ENCODE measurements at regions of chr5 and their contacts with region 1.

Region 1: GRCh38 chr5:133868946-133869518 is 99.4 kb downstream of the C5orf15 start:
- DNase-seq: peak; percentile 76
- H3K4me3 ChIP-seq: no peak overlapping the region
- H3K27ac ChIP-seq: no peak overlapping the region
- H3K4me1 ChIP-seq: peaks cover 6% of the 10 kb centered on the region
- H3K27me3 ChIP-seq: no peaks in the 10 kb centered on the region
- CTCF ChIP-seq: peak; percentile 75 to 82
- POLR2A ChIP-seq: no peak

Region 2: GRCh38 chr5:132591145-132591544 is 1277.9 kb before region 1 on chr5:
- CTCF ChIA-PET with region 1: no interaction called
- POLR2A ChIA-PET with region 1: no interaction called
- dilution Hi-C with region 1: no loop called
- intact Hi-C with region 1: no loop called
- DNase-seq: peak; percentile 23
- H3K4me3 ChIP-seq: no peak overlapping the region
- H3K27ac ChIP-seq: no peak overlapping the region
- H3K4me1 ChIP-seq: no peaks in the 10 kb centered on the region
- H3K27me3 ChIP-seq: no peaks in the 10 kb centered on the region
- CTCF ChIP-seq: no peak
- POLR2A ChIP-seq: no peak

Region 3: DNA sequence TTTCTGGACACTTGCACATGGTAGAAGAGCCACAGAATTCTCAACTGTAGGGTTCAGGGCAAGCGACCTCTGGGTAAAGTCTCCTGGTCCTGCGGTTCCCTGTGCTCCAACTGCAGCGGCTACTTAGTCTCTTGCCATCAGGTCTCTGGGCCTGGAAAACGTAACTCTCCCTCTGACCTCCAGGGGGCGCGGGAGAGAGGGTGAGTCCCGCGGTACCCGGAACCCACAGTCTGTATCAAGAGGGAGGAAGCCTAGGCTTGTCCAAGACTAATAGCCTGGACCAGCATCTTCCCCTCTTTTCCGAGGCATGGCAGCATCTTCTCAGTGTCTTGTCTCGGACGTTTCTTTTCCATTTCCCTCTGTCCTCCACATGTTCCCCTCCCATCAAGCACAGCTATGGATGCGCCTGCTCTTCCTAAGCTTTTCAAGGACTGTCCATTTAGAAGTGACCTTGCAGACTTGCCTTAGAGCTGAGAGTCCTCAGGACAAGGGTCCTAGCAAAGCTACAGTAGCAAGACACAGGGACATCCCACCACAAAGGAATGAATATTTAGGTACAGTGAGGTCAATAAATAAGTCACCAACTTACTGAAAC is 316.0 kb before region 1 on chr5:
- CTCF ChIA-PET with region 1: interaction called, 28 read pairs
- POLR2A ChIA-PET with region 1: no interaction called
- dilution Hi-C with region 1: no loop called
- intact Hi-C with region 1: loop called (anchors 1 kb)
- DNase-seq: peak; percentile 55
- H3K4me3 ChIP-seq: no peak overlapping the region
- H3K27ac ChIP-seq: no peak overlapping the region
- H3K4me1 ChIP-seq: no peaks in the 10 kb centered on the region
- H3K27me3 ChIP-seq: peaks cover 2 to 10% of the 10 kb centered on the region in 2 experiments
- CTCF ChIP-seq: peak; percentile 75 to 89
- POLR2A ChIP-seq: no peak

Region 4: DNA sequence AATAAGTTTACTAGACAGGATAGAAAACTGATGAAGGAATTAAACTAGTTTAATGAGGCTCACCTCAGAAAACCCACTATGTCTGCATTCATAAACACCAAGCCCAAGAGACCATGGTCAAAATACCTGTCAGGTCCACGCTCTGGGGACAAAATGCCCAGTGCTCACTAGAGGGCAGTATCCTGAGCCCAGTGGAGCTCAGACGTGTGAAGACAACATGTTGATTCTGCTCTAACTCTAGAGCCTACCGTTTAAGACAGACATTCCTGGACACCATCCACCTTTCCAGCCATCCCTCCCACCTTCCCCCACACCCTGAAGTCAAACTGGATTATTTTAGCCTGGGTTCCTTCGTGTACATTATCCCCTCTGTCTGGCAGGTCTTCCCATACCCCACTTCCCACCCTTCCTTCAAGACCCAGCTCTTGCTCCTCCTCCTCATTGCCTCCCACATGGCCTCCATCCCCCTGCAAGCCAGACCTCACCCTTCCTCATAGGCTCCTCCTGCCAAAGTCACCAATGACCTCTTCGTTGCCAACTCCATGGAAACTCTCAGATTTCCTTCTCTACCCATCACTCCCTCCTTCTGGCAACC is 114.4 kb before region 1 on chr5:
- CTCF ChIA-PET with region 1: interaction called, 25 read pairs
- POLR2A ChIA-PET with region 1: no interaction called
- dilution Hi-C with region 1: no loop called
- intact Hi-C with region 1: loop called (anchors 1 kb)
- DNase-seq: peak; percentile 21
- H3K4me3 ChIP-seq: no peak overlapping the region
- H3K27ac ChIP-seq: no peak overlapping the region
- H3K4me1 ChIP-seq: peaks cover 9% of the 10 kb centered on the region
- H3K27me3 ChIP-seq: peaks cover 0 to 5% of the 10 kb centered on the region in 2 experiments
- CTCF ChIP-seq: peak; percentile 40 to 47
- POLR2A ChIP-seq: no peak

Region 5: DNA sequence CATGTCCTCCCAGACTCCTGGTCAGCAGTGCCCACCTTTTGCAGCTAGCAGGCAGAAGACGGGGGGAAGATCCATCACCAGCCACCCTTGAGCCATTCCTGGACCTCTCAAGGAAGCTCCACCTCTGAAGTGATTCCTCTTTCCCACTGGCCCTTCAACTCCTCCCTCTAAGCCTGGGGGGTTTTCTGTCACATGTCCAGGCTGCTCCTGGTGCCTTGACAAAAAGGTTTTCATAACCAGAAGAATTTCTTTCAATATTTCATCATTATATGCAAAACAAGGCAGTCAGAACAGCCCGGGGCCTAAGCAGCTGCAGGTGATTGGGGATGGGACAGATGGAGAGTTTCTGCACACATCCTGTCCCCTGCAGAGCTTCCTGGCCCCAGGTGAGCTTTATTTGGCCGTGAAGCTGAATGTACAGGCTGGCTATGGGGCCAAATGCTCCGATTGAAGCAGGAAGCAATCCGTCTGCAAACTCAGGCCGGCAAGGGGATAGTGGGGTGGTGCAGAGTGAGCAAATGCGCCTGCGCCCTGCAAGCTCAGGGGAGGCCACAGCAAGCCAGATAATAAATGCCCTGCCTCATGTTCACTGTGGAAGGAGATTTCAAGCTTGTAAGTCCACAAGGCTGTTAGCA is 74.1 kb before region 1 on chr5:
- CTCF ChIA-PET with region 1: no interaction called
- POLR2A ChIA-PET with region 1: no interaction called
- dilution Hi-C with region 1: no loop called
- intact Hi-C with region 1: no loop called
- DNase-seq: no peak
- H3K4me3 ChIP-seq: no peak overlapping the region
- H3K27ac ChIP-seq: no peak overlapping the region
- H3K4me1 ChIP-seq: no peaks in the 10 kb centered on the region
- H3K27me3 ChIP-seq: peaks cover 0 to 3% of the 10 kb centered on the region in 2 experiments
- CTCF ChIP-seq: no peak
- POLR2A ChIP-seq: no peak

Region 6: GRCh38 chr5:133842846-133843611 is 26.0 kb before region 1 on chr5:
- CTCF ChIA-PET with region 1: no interaction called
- POLR2A ChIA-PET with region 1: no interaction called
- dilution Hi-C with region 1: no loop called
- intact Hi-C with region 1: no loop called
- DNase-seq: no peak
- H3K4me3 ChIP-seq: no peak overlapping the region
- H3K27ac ChIP-seq: no peak overlapping the region
- H3K4me1 ChIP-seq: no peaks in the 10 kb centered on the region
- H3K27me3 ChIP-seq: peaks cover 8 to 10% of the 10 kb centered on the region in 2 experiments
- CTCF ChIP-seq: no peak
- POLR2A ChIP-seq: no peak

Region 7: DNA sequence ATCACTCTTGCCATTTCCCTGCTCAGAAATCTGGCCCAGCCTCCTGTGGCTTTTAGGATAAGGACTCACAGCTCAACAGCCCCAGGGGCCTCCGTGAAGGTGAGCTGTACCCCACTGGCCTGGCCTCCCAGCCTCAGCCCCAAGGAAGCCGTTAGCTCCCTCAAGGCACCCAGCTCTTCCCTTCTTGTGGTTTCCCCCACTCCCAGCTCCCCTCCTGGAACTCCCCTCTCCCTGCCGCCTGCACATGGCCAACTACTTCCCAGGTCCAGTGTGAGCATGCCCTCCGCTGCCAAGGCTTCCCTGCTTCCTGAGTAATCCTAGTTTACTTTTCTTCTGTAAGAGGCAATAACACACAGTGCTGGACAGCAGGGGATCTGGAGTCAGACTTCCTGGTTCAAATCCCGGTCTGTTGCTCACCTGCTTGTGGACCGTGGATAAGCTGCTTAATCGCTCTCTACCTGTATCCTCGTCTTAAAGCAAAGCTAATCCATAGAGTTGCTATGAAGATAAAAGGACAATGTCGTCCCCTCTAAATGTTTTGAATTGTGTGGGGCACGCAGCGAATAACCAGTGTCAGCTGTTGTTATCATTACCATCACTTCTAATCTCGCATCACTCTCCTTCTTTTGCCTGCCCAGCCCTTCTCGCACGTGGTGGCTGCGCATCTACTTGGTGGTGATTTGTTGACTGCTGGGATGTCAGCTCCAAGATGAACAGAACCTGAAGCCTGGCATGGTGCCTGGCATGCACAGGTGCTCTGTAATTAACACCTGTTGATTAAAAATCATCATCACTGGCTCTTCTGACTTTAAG is 12.8 kb after region 1 on chr5:
- CTCF ChIA-PET with region 1: interaction called, 14 read pairs
- POLR2A ChIA-PET with region 1: no interaction called
- dilution Hi-C with region 1: no loop called
- intact Hi-C with region 1: no loop called
- DNase-seq: no peak
- H3K4me3 ChIP-seq: no peak overlapping the region
- H3K27ac ChIP-seq: no peak overlapping the region
- H3K4me1 ChIP-seq: no peaks in the 10 kb centered on the region
- H3K27me3 ChIP-seq: no peaks in the 10 kb centered on the region
- CTCF ChIP-seq: no peak
- POLR2A ChIP-seq: no peak

Region 8: GRCh38 chr5:133996683-133997252 is 127.7 kb after region 1 on chr5:
- CTCF ChIA-PET with region 1: no interaction called
- POLR2A ChIA-PET with region 1: no interaction called
- dilution Hi-C with region 1: no loop called
- intact Hi-C with region 1: no loop called
- DNase-seq: no peak
- H3K4me3 ChIP-seq: no peak overlapping the region
- H3K27ac ChIP-seq: no peak overlapping the region
- H3K4me1 ChIP-seq: peaks cover 20% of the 10 kb centered on the region
- H3K27me3 ChIP-seq: no peaks in the 10 kb centered on the region
- CTCF ChIP-seq: peak; percentile 53 to 57
- POLR2A ChIP-seq: no peak